Naive thymus-derived CD4-positive, alpha-beta T cell (primary cell): ENCODE measurements at regions of chr11 and their contacts with region 1.

Region 1: GRCh38 chr11:107565219-107565937 is at the start of gene ALKBH8:
- DNase-seq: peak; percentile 50 to 77 (median 75)
- ATAC-seq: peak; percentile 96
- H3K4me3 ChIP-seq: peak within 1 kb of the TSS; percentile 98
- H3K4me3 Mint-ChIP-seq: peak within 1 kb of the TSS; percentile 87 to 98 (median 94)
- H3K27ac ChIP-seq: peak within 1 kb of the TSS; percentile 73
- H3K27ac Mint-ChIP-seq: peak within 1 kb of the TSS; percentile 87 to 97 (median 90)
- H3K4me1 ChIP-seq: peaks cover 8 to 20% of the 10 kb centered on the region in 2 donors
- H3K4me1 Mint-ChIP-seq: peaks cover 28 to 70% (median 58%) of the 10 kb centered on the region in 7 donors
- H3K27me3 ChIP-seq: no peaks in the 10 kb centered on the region
- H3K27me3 Mint-ChIP-seq: peaks cover 0 to 3% (median 0%) of the 10 kb centered on the region in 5 donors
- total RNA-seq, gene ALKBH8: 9.5 to 19.1 (median 12.6) TPM

Region 2: DNA sequence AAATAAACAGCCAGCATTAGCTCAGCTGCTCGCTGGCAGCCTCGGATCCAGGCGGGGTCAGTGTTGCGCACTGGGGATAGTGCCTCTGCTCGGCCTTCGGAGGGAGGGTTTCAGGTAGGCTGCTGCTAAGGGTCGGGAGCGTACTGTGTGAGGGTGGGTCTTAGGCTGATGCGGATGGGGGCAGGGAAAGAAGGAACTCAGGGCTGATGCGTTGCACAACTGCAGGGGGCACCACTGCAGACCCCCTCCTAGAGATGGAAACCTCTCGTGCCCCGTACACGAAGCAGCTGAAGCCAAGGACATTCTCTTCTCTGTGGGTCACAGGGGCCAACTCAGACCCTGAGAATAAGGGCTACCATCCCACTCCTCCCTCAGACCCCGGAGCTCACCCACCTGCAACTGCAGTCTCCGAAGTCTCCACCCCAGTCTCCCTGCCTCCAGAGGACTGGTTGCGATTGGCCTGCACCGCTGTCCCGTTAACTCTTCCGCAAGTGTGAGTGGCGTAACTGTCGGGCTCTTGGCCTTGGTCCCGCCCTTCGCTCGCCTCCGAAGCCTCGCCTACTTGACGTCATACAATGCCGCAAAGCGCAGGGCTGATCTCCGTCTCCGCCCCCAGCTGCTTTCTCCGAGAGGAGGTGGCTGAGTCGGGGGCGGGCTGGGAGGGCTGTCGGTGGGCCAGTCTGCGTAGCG is 1488.3 kb before region 1 on chr11 and contains the start of gene KBTBD3:
- CTCF ChIA-PET with region 1: no interaction called
- POLR2A ChIA-PET with region 1: no interaction called
- intact Hi-C with region 1: loop called (anchors 5 to 10 kb)
- DNase-seq: peak; percentile 90 to 99 (median 98)
- ATAC-seq: peak; percentile 93
- H3K4me3 ChIP-seq: peak within 1 kb of the TSS; percentile 85
- H3K4me3 Mint-ChIP-seq: peak within 1 kb of the TSS; percentile 95 to 100 (median 98)
- H3K27ac ChIP-seq: peak within 1 kb of the TSS; percentile 91
- H3K27ac Mint-ChIP-seq: peak within 1 kb of the TSS; percentile 91 to 99 (median 98)
- H3K4me1 ChIP-seq: peaks cover 29 to 35% of the 10 kb centered on the region in 2 donors
- H3K4me1 Mint-ChIP-seq: peaks cover 34 to 76% (median 69%) of the 10 kb centered on the region in 7 donors
- H3K27me3 ChIP-seq: no peaks in the 10 kb centered on the region
- H3K27me3 Mint-ChIP-seq: no peaks in the 10 kb centered on the region
- total RNA-seq, gene KBTBD3: 5.1 to 16.6 (median 7.3) TPM

Region 3: DNA sequence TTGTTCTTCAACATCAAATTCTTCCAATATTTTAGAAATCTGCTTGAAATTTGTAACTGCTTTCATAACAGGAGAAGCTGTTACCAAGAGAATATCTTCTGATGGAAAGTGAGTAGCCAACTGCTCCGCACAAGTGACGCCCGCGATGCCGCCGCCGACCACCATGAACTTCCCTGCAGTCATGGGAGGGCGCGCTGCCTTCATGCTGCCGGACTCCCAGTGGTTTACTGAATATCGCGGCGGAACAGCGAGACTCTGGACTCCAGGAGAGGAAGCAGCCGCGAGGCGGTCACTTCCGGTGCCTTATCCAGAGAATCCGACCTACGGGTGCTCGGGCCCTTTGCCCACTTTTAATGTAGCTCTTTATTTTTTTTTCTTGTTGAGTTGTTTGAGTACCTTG is 737.7 kb before region 1 on chr11:
- CTCF ChIA-PET with region 1: no interaction called
- POLR2A ChIA-PET with region 1: no interaction called
- intact Hi-C with region 1: no loop called
- DNase-seq: no peak
- ATAC-seq: no peak
- H3K4me3 ChIP-seq: no peak overlapping the region
- H3K4me3 Mint-ChIP-seq: no peak overlapping the region
- H3K27ac ChIP-seq: no peak overlapping the region
- H3K27ac Mint-ChIP-seq: no peak overlapping the region
- H3K4me1 ChIP-seq: no peaks in the 10 kb centered on the region
- H3K4me1 Mint-ChIP-seq: no peaks in the 10 kb centered on the region
- H3K27me3 ChIP-seq: no peaks in the 10 kb centered on the region
- H3K27me3 Mint-ChIP-seq: no peaks in the 10 kb centered on the region

Region 4: GRCh38 chr11:107526197-107526596 is 39.2 kb before region 1 on chr11:
- CTCF ChIA-PET with region 1: no interaction called
- POLR2A ChIA-PET with region 1: no interaction called
- intact Hi-C with region 1: no loop called
- DNase-seq: no peak
- ATAC-seq: no peak
- H3K4me3 ChIP-seq: no peak overlapping the region
- H3K4me3 Mint-ChIP-seq: no peak overlapping the region
- H3K27ac ChIP-seq: no peak overlapping the region
- H3K27ac Mint-ChIP-seq: no peak overlapping the region
- H3K4me1 ChIP-seq: no peaks in the 10 kb centered on the region
- H3K4me1 Mint-ChIP-seq: no peaks in the 10 kb centered on the region
- H3K27me3 ChIP-seq: no peaks in the 10 kb centered on the region
- H3K27me3 Mint-ChIP-seq: no peaks in the 10 kb centered on the region

Region 5: GRCh38 chr11:107590460-107591377 is 25.3 kb after region 1 on chr11 and contains the start of gene ELMOD1:
- CTCF ChIA-PET with region 1: no interaction called
- POLR2A ChIA-PET with region 1: no interaction called
- intact Hi-C with region 1: loop called (anchors 2 kb)
- DNase-seq: peak in 5 of 9 donors; percentile 9 to 54 (median 18)
- ATAC-seq: peak; percentile 53
- H3K4me3 ChIP-seq: peak within 1 kb of the TSS; percentile 63
- H3K4me3 Mint-ChIP-seq: peak within 1 kb of the TSS; percentile 83 to 94 (median 88)
- H3K27ac ChIP-seq: no peak within 1 kb of the TSS
- H3K27ac Mint-ChIP-seq: peak within 1 kb of the TSS in 3 of 9 donors; percentile 16 to 82 (median 62)
- H3K4me1 ChIP-seq: peaks cover 8 to 13% of the 10 kb centered on the region in 2 donors
- H3K4me1 Mint-ChIP-seq: peaks cover 15 to 37% (median 20%) of the 10 kb centered on the region in 7 donors
- H3K27me3 ChIP-seq: peaks cover 28 to 35% of the 10 kb centered on the region in 2 donors
- H3K27me3 Mint-ChIP-seq: peaks cover 73 to 93% (median 82%) of the 10 kb centered on the region in 5 donors
- total RNA-seq, gene ELMOD1: not detected

Region 6: GRCh38 chr11:107858217-107859070 is 293.1 kb after region 1 on chr11 and contains the start of gene SLC35F2:
- CTCF ChIA-PET with region 1: no interaction called
- POLR2A ChIA-PET with region 1: no interaction called
- intact Hi-C with region 1: loop called (anchors 5 kb)
- DNase-seq: peak; percentile 15 to 81 (median 45)
- ATAC-seq: peak; percentile 88
- H3K4me3 ChIP-seq: peak within 1 kb of the TSS; percentile 88
- H3K4me3 Mint-ChIP-seq: peak within 1 kb of the TSS; percentile 89 to 98 (median 95)
- H3K27ac ChIP-seq: peak within 1 kb of the TSS; percentile 65
- H3K27ac Mint-ChIP-seq: peak within 1 kb of the TSS; percentile 21 to 88 (median 77)
- H3K4me1 ChIP-seq: no peaks in the 10 kb centered on the region
- H3K4me1 Mint-ChIP-seq: peaks cover 5 to 33% (median 26%) of the 10 kb centered on the region in 7 donors
- H3K27me3 ChIP-seq: no peaks in the 10 kb centered on the region
- H3K27me3 Mint-ChIP-seq: peaks cover 0 to 17% (median 4%) of the 10 kb centered on the region in 5 donors
- total RNA-seq, gene SLC35F2: 3.8 to 8.9 (median 4.5) TPM

Region 7: GRCh38 chr11:108008656-108009496 is 443.5 kb after region 1 on chr11 and contains the start of gene CUL5:
- CTCF ChIA-PET with region 1: no interaction called
- POLR2A ChIA-PET with region 1: no interaction called
- intact Hi-C with region 1: loop called (anchors 1 kb)
- DNase-seq: peak; percentile 84 to 94 (median 90)
- ATAC-seq: peak; percentile 94
- H3K4me3 ChIP-seq: peak within 1 kb of the TSS; percentile 94
- H3K4me3 Mint-ChIP-seq: peak within 1 kb of the TSS in 9 of 10 donors; percentile 89 to 100 (median 99)
- H3K27ac ChIP-seq: peak within 1 kb of the TSS; percentile 94
- H3K27ac Mint-ChIP-seq: peak within 1 kb of the TSS; percentile 94 to 99 (median 96)
- H3K4me1 ChIP-seq: peaks cover 15 to 25% of the 10 kb centered on the region in 2 donors
- H3K4me1 Mint-ChIP-seq: peaks cover 7 to 18% (median 12%) of the 10 kb centered on the region in 7 donors
- H3K27me3 ChIP-seq: no peaks in the 10 kb centered on the region
- H3K27me3 Mint-ChIP-seq: no peaks in the 10 kb centered on the region
- total RNA-seq, gene CUL5: 32.3 to 59.7 (median 39.2) TPM

Region 8: GRCh38 chr11:108170184-108170583 is 604.8 kb after region 1 on chr11:
- CTCF ChIA-PET with region 1: no interaction called
- POLR2A ChIA-PET with region 1: no interaction called
- intact Hi-C with region 1: no loop called
- DNase-seq: no peak
- ATAC-seq: no peak
- H3K4me3 ChIP-seq: no peak overlapping the region
- H3K4me3 Mint-ChIP-seq: peak overlapping the region in 1 of 10 donors; percentile 3
- H3K27ac ChIP-seq: no peak overlapping the region
- H3K27ac Mint-ChIP-seq: peak overlapping the region; percentile 50 to 92 (median 76)
- H3K4me1 ChIP-seq: no peaks in the 10 kb centered on the region
- H3K4me1 Mint-ChIP-seq: peaks cover 16 to 47% (median 25%) of the 10 kb centered on the region in 7 donors
- H3K27me3 ChIP-seq: no peaks in the 10 kb centered on the region
- H3K27me3 Mint-ChIP-seq: no peaks in the 10 kb centered on the region

Region 9: DNA sequence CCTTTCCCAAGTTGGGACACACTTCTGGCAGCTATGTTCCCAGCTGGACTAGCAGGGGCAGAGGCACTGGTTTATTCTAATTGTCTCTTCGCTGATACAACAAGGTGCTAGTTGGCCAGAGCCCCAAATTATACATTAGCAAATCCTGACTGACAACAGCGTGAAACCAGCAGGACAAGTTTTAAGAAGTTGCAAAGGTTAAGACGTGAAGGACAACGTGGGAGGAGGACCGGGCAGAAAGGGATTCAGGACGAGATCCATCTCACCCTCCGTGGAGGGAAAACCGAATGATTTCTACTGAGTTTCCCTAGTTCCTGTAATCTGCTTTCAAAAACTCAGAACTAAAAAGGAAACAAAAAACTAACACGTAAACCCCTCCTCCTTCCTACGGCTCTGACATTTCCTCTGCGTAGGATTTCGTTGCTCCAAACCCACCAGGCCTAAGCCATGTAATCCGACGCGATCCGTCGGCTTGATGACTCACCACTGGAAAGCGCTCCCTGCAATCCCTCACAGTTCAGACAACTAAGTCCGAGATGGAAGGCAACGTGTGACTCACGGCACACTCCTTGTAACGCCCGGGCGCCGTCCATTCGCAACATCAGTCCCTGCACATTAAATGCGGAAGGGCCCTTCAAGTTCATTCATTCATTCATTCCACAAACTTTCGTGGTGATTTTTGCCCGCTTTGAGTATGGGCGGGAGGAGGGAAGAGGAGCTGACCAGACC is 932.1 kb after region 1 on chr11:
- CTCF ChIA-PET with region 1: no interaction called
- POLR2A ChIA-PET with region 1: no interaction called
- intact Hi-C with region 1: loop called (anchors 10 kb)
- DNase-seq: peak in 8 of 9 donors; percentile 68 to 83 (median 76)
- ATAC-seq: peak; percentile 92
- H3K4me3 ChIP-seq: peak overlapping the region; percentile 77
- H3K4me3 Mint-ChIP-seq: peak overlapping the region; percentile 95 to 100 (median 98)
- H3K27ac ChIP-seq: peak overlapping the region; percentile 87
- H3K27ac Mint-ChIP-seq: peak overlapping the region; percentile 95 to 100 (median 99)
- H3K4me1 ChIP-seq: peaks cover 0 to 3% of the 10 kb centered on the region in 2 donors
- H3K4me1 Mint-ChIP-seq: peaks cover 8 to 33% (median 24%) of the 10 kb centered on the region in 7 donors
- H3K27me3 ChIP-seq: no peaks in the 10 kb centered on the region
- H3K27me3 Mint-ChIP-seq: no peaks in the 10 kb centered on the region